Stomach (tissue), 19 donors: ENCODE measurements at regions of chr22 and their contacts with region 1.

Region 1: GRCh38 chr22:46317646-46318045 is 17.9 kb upstream of the TRMU start:
- DNase-seq: no peak
- H3K4me3 ChIP-seq: no peak overlapping the region
- H3K27ac ChIP-seq: no peak overlapping the region
- H3K4me1 ChIP-seq: peaks cover 0 to 2% (median 0%) of the 10 kb centered on the region in 4 donors
- H3K27me3 ChIP-seq: no peaks in the 10 kb centered on the region
- CTCF ChIP-seq: no peak
- EP300 ChIP-seq: no peak
- POLR2A ChIP-seq: no peak

Region 2: GRCh38 chr22:45923835-45924234 is 393.8 kb before region 1 on chr22:
- intact Hi-C with region 1: loop called (anchors 5 kb)
- DNase-seq: peak in 1 of 2 donors; percentile 64
- H3K4me3 ChIP-seq: no peak overlapping the region
- H3K27ac ChIP-seq: no peak overlapping the region
- H3K4me1 ChIP-seq: peaks cover 5 to 14% (median 10%) of the 10 kb centered on the region in 4 donors
- H3K27me3 ChIP-seq: peaks cover 0 to 37% (median 0%) of the 10 kb centered on the region in 3 donors
- CTCF ChIP-seq: no peak
- EP300 ChIP-seq: no peak
- POLR2A ChIP-seq: no peak

Region 3: DNA sequence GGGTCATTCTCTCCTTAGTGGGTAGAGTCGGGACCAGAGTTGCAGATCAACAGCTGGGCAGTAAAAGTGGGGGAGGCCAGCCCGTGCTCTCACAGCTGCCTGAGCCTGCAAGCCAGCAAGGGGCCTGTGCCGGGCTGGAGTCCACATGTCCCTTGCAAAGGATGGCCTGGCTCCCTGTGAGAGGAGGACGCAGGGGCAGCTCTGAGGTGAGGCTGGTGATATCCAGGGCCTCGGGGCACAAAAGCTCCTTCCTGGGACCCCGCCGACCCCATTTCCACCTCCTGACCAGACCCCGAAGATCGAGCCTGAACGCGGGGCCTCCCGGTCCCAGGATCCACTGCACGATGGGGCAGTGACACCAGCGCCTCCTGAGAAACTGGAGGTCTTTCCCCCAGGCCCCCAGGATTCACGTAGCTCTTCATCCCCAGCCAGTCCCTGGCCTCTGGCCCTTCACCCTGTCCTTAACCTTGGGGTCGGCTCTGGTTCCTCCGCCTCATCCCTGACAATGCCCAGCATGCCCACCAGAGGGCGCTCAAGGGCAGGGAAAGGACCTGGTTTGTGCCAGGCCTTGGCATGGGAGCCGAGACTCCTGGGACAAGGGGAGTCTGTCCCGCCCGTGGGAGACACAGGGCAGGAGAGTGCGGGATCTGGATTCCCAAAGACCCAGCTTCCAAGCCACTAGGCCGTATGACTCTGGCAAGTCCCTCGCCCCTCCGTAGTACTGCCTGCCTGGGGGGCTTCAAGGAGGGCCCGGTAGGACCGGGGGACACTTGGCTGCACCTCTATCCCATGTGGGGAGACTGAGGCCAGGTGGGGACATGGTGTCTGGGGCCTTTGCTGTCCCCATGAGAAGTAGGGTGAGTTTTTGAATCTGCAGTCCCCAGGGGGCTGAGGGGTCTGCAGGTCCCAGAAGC is 322.9 kb before region 1 on chr22:
- intact Hi-C with region 1: loop called (anchors 5 kb)
- DNase-seq: peak; percentile 85 to 88
- H3K4me3 ChIP-seq: no peak overlapping the region
- H3K27ac ChIP-seq: peak overlapping the region in 2 of 5 donors; percentile 71 to 78
- H3K4me1 ChIP-seq: peaks cover 30 to 55% (median 48%) of the 10 kb centered on the region in 4 donors
- H3K27me3 ChIP-seq: no peaks in the 10 kb centered on the region
- CTCF ChIP-seq: peak in 6 of 7 experiments; percentile 87 to 100 (median 95)
- EP300 ChIP-seq: no peak
- POLR2A ChIP-seq: no peak

Region 4: GRCh38 chr22:46122511-46122971 is 195.1 kb before region 1 on chr22:
- intact Hi-C with region 1: loop called (anchors 2 kb)
- DNase-seq: peak; percentile 76 to 88
- H3K4me3 ChIP-seq: peak overlapping the region in 1 of 4 donors; percentile 3
- H3K27ac ChIP-seq: no peak overlapping the region
- H3K4me1 ChIP-seq: peaks cover 7 to 24% (median 13%) of the 10 kb centered on the region in 4 donors
- H3K27me3 ChIP-seq: no peaks in the 10 kb centered on the region
- CTCF ChIP-seq: peak in 6 of 7 experiments; percentile 26 to 95 (median 92)
- EP300 ChIP-seq: no peak
- POLR2A ChIP-seq: no peak